Activated CD4-positive, alpha-beta memory T cell treated with anti-CD3 and anti-CD28 coated beads, Interleukin-2, amount 10 ng/mL, durations not matched to agents 7 days and 5 days (primary cell): ENCODE measurements at regions of chr19 and their contacts with region 1.

Region 1: DNA sequence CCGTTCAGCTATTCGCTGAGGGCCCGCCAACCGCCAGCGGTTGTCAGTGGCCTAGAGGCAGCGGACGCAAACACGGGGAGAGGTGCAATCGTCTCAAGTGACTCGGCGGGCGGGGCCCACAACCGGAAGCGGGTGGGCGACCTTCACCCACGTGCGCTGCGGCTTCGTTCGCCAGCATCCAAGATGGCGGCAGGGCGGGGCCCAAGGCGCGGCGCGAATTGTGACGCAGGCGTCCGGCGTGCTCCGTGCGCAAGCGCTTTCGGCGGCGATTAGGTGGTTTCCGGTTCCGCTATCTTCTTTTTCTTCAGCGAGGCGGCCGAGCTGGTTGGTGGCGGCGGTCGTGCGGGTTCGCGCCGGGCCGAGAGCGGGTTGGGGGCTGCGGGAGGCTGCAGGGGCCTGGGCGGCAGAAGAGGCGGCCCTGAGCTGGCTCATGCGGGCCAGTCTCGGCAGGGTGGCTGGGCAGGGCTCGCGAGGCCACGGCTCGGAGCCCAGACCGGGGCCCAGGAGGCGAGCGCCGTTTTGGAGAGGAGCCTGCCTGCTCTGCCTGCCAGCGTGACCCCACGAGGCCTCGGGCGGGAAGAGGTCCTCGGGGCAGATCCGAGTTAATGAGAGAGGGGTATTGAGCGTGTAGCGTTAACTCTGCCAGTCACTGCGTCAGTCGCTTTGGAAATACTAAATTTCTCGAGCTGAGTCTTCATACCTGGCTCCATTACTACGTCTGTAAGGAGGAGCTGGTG is at the start of gene UBA52:
- DNase-seq: peak; percentile 99
- H3K4me3 Mint-ChIP-seq: peak within 1 kb of the TSS; percentile 91
- H3K27ac Mint-ChIP-seq: peak within 1 kb of the TSS; percentile 90
- H3K4me1 Mint-ChIP-seq: peaks cover 35% of the 10 kb centered on the region
- H3K27me3 Mint-ChIP-seq: no peaks in the 10 kb centered on the region
- total RNA-seq, gene UBA52: 1,374 to 1,409 TPM

Region 2: DNA sequence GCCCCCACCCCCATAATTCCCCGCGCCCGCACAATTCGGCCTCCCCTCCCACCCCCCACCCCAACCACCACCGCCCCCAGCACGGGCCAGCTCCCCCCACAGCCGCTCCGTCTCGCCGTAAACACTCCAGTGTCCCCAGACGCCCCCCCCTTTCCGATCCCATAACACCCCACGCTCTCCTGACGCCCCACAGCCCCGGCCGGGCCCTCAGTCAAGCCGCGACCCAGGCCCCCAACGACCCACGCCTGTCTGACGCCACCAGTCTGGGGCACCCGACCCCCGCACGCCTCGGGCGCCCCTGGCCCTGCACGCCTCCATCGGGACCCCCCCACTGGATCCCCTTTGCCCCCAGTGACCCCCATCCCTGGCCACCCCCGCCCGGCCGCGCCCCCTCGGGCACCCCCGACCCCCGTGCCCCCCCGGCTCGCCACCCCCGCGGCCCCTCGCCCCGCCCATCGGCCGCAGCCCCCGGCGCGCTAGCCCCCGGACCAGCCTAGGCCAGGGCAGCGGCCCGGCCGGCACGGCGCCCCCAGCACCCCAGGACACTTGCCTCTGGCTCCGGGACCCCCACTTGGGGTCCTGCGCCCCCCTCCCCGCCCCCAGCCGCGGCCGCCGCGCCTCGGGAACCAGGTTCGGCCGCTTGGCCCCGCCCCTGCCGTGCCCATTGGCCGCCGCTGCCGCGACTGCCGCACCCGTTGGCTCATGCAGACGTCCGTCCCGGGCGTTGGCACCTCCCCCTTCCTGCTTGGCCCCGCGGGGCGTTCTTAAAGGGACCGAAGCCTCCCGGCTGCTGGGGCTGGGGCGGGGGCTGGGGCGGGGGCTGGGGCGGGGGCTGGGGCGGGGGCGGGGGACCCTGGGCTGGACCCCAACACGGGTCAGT is 28.6 kb before region 1 on chr19 and contains the start of gene FKBP8:
- CTCF ChIA-PET with region 1: interaction called, 14 read pairs
- POLR2A ChIA-PET with region 1: interaction called, 44 read pairs
- DNase-seq: peak; percentile 96
- H3K4me3 Mint-ChIP-seq: peak within 1 kb of the TSS; percentile 95
- H3K27ac Mint-ChIP-seq: peak within 1 kb of the TSS; percentile 98
- H3K4me1 Mint-ChIP-seq: peaks cover 31% of the 10 kb centered on the region
- H3K27me3 Mint-ChIP-seq: no peaks in the 10 kb centered on the region
- total RNA-seq, gene FKBP8: 263 TPM

Region 3: DNA sequence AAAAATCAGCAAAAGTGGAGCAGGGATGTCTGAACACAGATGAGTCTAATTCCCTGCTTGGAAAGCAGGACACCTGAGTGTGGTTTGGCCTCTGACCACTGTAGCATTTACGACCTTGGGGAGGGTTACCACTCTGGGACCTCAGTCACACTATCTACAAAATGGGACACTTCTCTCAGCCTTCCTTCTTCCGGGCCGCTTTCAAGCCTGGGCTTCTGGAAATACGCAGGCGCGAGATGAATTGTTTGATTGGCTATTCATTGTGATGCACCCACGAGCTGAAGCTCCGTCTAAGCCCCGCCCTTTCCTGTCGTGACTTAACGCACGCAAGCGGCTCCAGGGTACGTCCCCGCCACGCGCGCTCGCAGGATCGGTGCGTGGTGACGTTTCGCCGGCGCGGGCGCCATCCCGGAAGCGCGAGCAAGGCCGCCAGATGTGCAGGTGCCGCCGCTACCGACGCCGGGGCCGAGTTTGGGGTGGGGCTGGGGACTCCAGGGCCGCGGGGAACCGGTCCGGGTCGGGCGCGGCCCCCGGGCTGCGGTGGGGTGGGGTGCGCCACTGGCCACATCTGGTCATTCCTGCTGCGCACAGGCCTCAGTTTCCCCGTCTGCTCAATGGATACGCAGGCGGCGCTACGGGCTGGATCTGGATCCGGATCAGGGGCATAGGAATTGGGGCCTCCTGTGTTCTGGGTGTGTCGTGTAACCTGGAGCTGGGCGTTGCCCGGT is 14.1 kb before region 1 on chr19 and contains the start of gene KXD1:
- CTCF ChIA-PET with region 1: interaction called, 18 read pairs
- POLR2A ChIA-PET with region 1: interaction called, 137 read pairs
- DNase-seq: peak; percentile 99
- H3K4me3 Mint-ChIP-seq: peak within 1 kb of the TSS; percentile 95
- H3K27ac Mint-ChIP-seq: peak within 1 kb of the TSS; percentile 87
- H3K4me1 Mint-ChIP-seq: peaks cover 22% of the 10 kb centered on the region
- H3K27me3 Mint-ChIP-seq: no peaks in the 10 kb centered on the region
- total RNA-seq, gene KXD1: 93.0 to 99.1 TPM

Region 4: DNA sequence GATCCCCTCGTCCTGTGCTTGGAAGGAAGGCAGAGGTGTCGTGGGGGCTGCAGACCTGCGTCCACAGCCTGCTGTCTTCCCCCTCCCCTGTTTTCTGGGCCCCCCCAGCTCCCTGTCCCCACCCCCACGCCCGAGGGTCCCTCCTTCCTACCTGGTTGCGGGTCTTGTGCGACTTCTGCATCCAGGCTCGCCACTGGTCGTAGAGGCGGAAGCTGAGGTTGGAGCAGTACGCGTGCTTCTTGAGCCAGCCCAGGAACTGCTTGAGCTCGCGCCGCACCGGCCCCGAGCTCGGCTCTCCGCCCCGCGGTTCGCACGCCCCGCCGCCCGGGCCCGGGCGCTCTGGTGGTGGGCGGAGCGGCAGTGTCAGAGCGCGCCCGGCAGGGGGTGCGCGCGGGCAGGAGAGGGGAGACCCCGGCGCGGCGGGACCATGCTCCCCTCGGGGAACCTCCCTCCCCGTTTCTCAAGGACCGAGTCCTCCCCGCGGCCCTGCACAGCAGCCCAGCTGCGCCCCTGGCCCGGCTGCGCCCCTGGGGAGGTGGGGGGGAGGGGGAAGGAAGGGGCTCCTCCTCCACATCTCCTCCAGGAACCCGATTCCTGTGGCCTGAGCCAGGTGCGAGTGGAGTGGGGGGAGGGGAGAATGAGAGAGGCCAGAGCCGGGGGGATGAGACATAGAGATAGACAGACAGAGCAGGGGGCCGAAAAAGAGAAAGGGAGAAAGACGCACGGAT is 22.5 kb after region 1 on chr19:
- CTCF ChIA-PET with region 1: interaction called, 63 read pairs
- POLR2A ChIA-PET with region 1: interaction called, 114 read pairs
- DNase-seq: peak; percentile 69
- H3K4me3 Mint-ChIP-seq: no peak overlapping the region
- H3K27ac Mint-ChIP-seq: no peak overlapping the region
- H3K4me1 Mint-ChIP-seq: peaks cover 25% of the 10 kb centered on the region
- H3K27me3 Mint-ChIP-seq: peaks cover 7% of the 10 kb centered on the region

Region 5: DNA sequence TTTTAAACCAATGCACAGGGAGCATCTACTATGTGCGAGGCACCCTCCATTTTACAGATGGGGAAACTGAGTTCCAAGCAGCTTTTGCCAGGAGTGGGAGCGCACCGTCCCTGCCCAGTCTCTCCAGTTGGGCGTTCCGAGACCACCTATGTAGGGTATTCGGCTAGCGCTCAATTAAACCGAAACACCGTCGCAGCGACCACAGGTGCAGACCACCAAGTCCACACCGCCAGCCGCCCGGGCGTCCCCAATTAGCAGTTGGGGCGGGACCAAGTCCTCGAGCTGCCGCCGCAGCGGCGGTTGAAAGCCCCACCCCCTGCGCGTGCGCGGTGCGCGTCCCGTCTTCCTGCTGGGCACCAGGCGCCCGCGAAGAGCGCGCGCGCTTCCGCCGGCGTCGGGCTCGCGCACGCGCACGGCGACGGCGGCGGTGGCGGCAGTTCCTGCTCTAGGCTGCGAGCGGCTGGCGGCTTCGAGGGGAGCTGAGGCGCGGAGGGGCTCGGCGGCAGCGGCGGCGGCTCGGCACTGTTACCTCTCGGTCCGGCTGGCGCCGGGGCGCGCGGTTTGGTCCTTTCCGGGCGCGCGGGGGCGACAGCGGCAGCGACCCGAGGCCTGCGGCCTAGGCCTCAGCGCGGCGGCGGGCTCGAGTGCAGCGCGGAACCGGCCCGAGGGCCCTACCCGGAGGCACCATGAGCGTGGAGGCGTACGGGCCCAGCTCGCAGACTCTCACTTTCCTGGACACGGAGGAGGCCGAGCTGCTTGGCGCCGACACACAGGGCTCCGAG is 260.0 kb after region 1 on chr19 and contains the start of gene UPF1:
- CTCF ChIA-PET with region 1: no interaction called
- POLR2A ChIA-PET with region 1: interaction called, 11 read pairs
- DNase-seq: peak; percentile 95
- H3K4me3 Mint-ChIP-seq: peak within 1 kb of the TSS; percentile 97
- H3K27ac Mint-ChIP-seq: peak within 1 kb of the TSS; percentile 83
- H3K4me1 Mint-ChIP-seq: peaks cover 40% of the 10 kb centered on the region
- H3K27me3 Mint-ChIP-seq: peaks cover 4% of the 10 kb centered on the region
- total RNA-seq, gene UPF1: 74.4 to 74.6 TPM

Region 6: DNA sequence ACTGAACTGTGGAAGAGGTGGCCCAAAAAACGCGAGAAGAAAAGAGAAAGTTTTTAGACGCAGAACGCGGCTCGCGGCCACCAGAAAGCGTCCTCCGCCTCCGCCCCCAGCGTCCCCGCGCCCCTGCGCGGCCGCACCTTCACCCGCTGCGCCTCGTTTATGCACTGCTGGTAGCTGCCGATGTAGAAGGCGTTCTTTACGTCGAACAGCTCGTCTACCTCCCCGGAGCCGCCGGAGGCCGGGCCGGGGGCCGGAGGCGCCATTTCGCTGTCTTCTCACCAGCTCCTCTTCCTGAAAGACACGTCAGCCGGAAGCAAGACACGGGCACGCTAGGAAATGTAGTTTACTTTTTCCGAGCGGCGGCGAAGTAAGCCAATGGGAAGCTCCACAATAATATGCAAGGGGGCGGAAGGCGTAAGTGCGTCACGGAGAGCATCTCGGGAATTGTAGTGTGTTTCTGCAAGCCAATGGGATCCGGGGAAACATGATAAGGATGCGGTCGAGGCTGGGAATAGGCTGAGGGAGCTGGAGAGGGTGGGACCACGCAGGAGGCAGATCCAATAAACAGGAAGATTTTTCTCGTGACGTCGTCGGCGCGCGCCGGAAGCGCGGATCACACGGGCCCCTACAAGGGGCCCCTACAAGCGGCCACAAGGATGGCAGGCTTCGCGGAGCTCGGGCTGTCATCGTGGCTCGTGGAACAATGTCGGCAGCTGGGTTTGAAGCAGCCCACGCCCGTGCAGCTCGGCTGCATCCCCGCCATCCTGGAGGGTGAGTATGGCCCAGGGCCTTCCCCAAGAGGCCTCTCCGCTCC is 347.6 kb after region 1 on chr19 and contains the starts of genes COPE and DDX49:
- CTCF ChIA-PET with region 1: no interaction called
- POLR2A ChIA-PET with region 1: interaction called, 17 read pairs
- DNase-seq: peak; percentile 99
- H3K4me3 Mint-ChIP-seq: peak within 1 kb of the TSS; percentile 97
- H3K27ac Mint-ChIP-seq: peak within 1 kb of the TSS; percentile 88
- H3K4me1 Mint-ChIP-seq: peaks cover 46% of the 10 kb centered on the region
- H3K27me3 Mint-ChIP-seq: no peaks in the 10 kb centered on the region
- total RNA-seq, gene COPE: 274 to 278 TPM
- total RNA-seq, gene DDX49: 34.0 to 36.2 TPM